Stomach (tissue), 19 donors: ENCODE measurements at regions of chr13 and their contacts with region 1.

Region 1: GRCh38 chr13:26929971-26930730 is 169.6 kb upstream of the GPR12 start:
- DNase-seq: peak; percentile 69 to 88
- H3K4me3 ChIP-seq: no peak overlapping the region
- H3K27ac ChIP-seq: no peak overlapping the region
- H3K4me1 ChIP-seq: peaks cover 0 to 7% (median 3%) of the 10 kb centered on the region in 4 donors
- H3K27me3 ChIP-seq: peaks cover 0 to 14% (median 0%) of the 10 kb centered on the region in 3 donors
- CTCF ChIP-seq: peak in 4 of 7 experiments; percentile 67 to 93 (median 90)
- EP300 ChIP-seq: no peak
- POLR2A ChIP-seq: no peak

Region 2: GRCh38 chr13:26719356-26719945 is 210.7 kb before region 1 on chr13:
- intact Hi-C with region 1: loop called (anchors 10 kb)
- DNase-seq: no peak
- H3K4me3 ChIP-seq: no peak overlapping the region
- H3K27ac ChIP-seq: no peak overlapping the region
- H3K4me1 ChIP-seq: no peaks in the 10 kb centered on the region
- H3K27me3 ChIP-seq: peaks cover 0 to 9% (median 0%) of the 10 kb centered on the region in 3 donors
- CTCF ChIP-seq: no peak
- EP300 ChIP-seq: no peak
- POLR2A ChIP-seq: no peak

Region 3: GRCh38 chr13:27035982-27036981 is 106.1 kb after region 1 on chr13:
- intact Hi-C with region 1: no loop called
- DNase-seq: no peak
- H3K4me3 ChIP-seq: no peak overlapping the region
- H3K27ac ChIP-seq: peak overlapping the region in 3 of 5 donors; percentile 8 to 53 (median 38)
- H3K4me1 ChIP-seq: peaks cover 0 to 33% (median 18%) of the 10 kb centered on the region in 4 donors
- H3K27me3 ChIP-seq: no peaks in the 10 kb centered on the region
- CTCF ChIP-seq: no peak
- EP300 ChIP-seq: no peak
- POLR2A ChIP-seq: no peak

Region 4: DNA sequence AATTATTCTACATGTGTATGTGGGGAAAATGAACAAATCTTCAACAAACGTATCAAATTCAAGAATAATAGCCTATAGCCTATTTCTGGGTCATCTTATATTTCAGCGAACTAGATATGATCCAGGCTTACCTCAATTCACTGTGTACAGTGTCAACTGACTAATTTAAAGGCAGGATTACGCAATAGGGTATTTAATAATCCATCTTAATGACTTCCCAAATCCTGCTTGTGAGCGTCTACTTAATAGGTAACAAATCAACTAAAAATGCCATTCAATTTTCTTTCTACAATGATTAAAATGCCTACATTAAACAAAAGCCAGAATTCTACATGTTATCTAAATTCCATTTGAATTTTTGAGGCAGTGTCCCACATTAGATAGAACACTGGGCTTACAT is 174.5 kb after region 1 on chr13:
- intact Hi-C with region 1: no loop called
- DNase-seq: no peak
- H3K4me3 ChIP-seq: no peak overlapping the region
- H3K27ac ChIP-seq: no peak overlapping the region
- H3K4me1 ChIP-seq: peaks cover 0 to 7% (median 3%) of the 10 kb centered on the region in 4 donors
- H3K27me3 ChIP-seq: no peaks in the 10 kb centered on the region
- CTCF ChIP-seq: no peak
- EP300 ChIP-seq: no peak
- POLR2A ChIP-seq: no peak